CD4-positive, alpha-beta T cell (primary cell): ENCODE measurements at regions of chr15 and their contacts with region 1.

Region 1: GRCh38 chr15:22980189-22981050 is at the start of gene CYFIP1:
- DNase-seq: peak in 5 of 14 experiments; percentile 8 to 59 (median 22)
- ATAC-seq: peak; percentile 41
- H3K4me3 ChIP-seq: peak within 1 kb of the TSS; percentile 63
- H3K4me3 Mint-ChIP-seq: peak within 1 kb of the TSS; percentile 90
- H3K27ac ChIP-seq: no peak within 1 kb of the TSS
- H3K27ac Mint-ChIP-seq: no peak within 1 kb of the TSS
- H3K4me1 ChIP-seq: peaks cover 19% of the 10 kb centered on the region
- H3K4me1 Mint-ChIP-seq: peaks cover 14% of the 10 kb centered on the region
- H3K27me3 ChIP-seq: peaks cover 13 to 14% of the 10 kb centered on the region in 2 experiments
- H3K27me3 Mint-ChIP-seq: peaks cover 17% of the 10 kb centered on the region
- CTCF ChIP-seq: no peak
- total RNA-seq, gene CYFIP1: 3.2 to 4.4 TPM

Region 2: DNA sequence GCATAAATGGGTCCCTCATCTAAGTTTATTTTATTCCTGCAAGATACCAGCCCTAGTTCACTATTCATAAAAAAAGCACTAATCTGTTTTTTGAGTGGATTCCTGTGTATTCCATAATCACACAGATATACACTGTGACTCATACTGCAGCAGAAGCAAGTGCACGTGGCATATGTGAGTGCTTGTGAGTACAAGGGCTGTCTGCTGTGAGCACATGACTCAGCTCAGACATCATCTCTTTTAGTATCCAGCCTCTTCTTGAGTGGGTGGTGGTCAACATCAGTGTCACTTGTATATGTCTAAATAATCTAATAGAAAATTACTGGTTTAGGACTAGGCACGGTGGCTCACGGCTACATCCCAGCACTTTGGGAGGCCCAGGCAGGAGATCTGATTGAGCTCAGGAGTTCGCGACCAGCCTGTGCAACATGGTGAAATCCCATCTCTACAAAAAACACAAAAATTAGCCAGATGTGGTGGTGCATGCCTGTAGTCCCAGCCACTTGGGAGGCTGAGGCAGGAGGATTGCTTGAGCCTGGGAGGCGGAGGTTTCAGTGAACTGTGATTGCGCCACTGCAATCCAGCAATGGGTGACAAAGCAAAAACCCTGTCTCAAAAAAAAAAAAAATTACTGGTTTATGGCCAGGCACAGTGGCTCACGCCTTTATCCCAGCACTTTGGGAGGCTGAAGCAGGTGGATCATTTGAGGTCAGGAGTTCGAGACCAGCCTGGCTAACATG is 92.1 kb before region 1 on chr15:
- CTCF ChIA-PET with region 1: no interaction called
- POLR2A ChIA-PET with region 1: no interaction called
- intact Hi-C with region 1: loop called in 1 of 2 experiments (anchors 10 kb)
- DNase-seq: no peak
- ATAC-seq: no peak
- H3K4me3 ChIP-seq: no peak overlapping the region
- H3K4me3 Mint-ChIP-seq: no peak overlapping the region
- H3K27ac ChIP-seq: no peak overlapping the region
- H3K27ac Mint-ChIP-seq: no peak overlapping the region
- H3K4me1 ChIP-seq: no peaks in the 10 kb centered on the region
- H3K4me1 Mint-ChIP-seq: no peaks in the 10 kb centered on the region
- H3K27me3 ChIP-seq: no peaks in the 10 kb centered on the region
- H3K27me3 Mint-ChIP-seq: no peaks in the 10 kb centered on the region
- CTCF ChIP-seq: no peak

Region 3: DNA sequence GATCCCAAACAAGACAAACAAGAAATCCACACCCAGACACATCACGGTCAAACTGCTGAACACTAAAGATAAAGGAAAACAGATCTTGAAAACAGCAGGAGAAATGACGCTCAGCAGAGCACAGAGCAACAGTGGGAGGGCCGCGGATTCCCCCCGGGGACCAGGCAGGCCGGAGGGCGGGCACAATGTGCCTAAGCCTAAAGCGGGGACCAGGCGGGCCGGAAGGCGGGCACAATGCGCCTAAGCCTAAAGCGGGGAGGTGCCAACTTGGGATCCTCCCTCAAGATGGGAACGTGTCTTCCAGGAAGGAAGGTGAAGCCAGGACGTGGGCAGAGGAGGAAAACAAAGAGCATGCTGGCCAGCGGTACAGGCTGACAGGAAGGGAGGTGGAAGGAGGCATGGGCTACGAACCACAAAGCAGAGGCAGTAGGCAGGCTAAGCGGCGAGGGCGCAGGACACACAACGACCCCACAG is 31.3 kb before region 1 on chr15:
- CTCF ChIA-PET with region 1: no interaction called
- POLR2A ChIA-PET with region 1: no interaction called
- intact Hi-C with region 1: no loop called
- DNase-seq: peak in 1 of 14 experiments; percentile 11
- ATAC-seq: no peak
- H3K4me3 ChIP-seq: no peak overlapping the region
- H3K4me3 Mint-ChIP-seq: peak overlapping the region; percentile 53
- H3K27ac ChIP-seq: no peak overlapping the region
- H3K27ac Mint-ChIP-seq: no peak overlapping the region
- H3K4me1 ChIP-seq: peaks cover 4% of the 10 kb centered on the region
- H3K4me1 Mint-ChIP-seq: peaks cover 12% of the 10 kb centered on the region
- H3K27me3 ChIP-seq: no peaks in the 10 kb centered on the region
- H3K27me3 Mint-ChIP-seq: peaks cover 7% of the 10 kb centered on the region
- CTCF ChIP-seq: no peak

Region 4: DNA sequence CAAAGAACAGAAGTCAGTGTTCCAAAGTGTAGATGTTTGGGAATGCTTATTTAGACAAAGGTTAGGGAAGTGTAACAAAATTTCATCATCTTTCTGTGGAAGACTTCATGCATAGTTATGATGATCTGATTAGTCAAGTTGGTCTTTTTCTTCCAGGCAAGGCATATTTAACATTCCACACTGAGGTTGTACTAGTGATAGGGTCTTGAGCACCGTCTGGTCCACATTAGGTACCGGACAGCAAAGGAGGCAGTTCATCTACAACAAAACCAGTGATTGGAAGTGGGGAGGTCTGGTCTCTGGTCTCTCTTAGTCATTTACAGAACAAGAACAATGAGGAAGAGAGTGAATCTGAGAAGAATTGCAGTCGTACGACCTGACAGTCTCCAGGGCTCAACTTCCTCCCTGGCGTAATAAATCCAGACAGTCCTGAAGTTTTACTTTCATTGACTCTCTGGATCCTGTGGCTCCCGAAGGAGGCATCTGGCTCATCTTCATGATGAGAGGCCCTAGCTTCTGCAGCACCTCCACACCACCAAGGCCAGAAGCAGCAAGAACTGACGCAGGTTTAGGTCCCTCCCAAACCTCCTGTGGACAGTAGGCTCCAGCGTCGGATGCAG is 11.4 kb after region 1 on chr15:
- CTCF ChIA-PET with region 1: no interaction called
- POLR2A ChIA-PET with region 1: no interaction called
- intact Hi-C with region 1: no loop called
- DNase-seq: no peak
- ATAC-seq: no peak
- H3K4me3 ChIP-seq: no peak overlapping the region
- H3K4me3 Mint-ChIP-seq: no peak overlapping the region
- H3K27ac ChIP-seq: no peak overlapping the region
- H3K27ac Mint-ChIP-seq: no peak overlapping the region
- H3K4me1 ChIP-seq: no peaks in the 10 kb centered on the region
- H3K4me1 Mint-ChIP-seq: no peaks in the 10 kb centered on the region
- H3K27me3 ChIP-seq: no peaks in the 10 kb centered on the region
- H3K27me3 Mint-ChIP-seq: no peaks in the 10 kb centered on the region
- CTCF ChIP-seq: no peak